WTC11 (cell line): ENCODE measurements at regions of chr6 and their contacts with region 1.

Region 1: DNA sequence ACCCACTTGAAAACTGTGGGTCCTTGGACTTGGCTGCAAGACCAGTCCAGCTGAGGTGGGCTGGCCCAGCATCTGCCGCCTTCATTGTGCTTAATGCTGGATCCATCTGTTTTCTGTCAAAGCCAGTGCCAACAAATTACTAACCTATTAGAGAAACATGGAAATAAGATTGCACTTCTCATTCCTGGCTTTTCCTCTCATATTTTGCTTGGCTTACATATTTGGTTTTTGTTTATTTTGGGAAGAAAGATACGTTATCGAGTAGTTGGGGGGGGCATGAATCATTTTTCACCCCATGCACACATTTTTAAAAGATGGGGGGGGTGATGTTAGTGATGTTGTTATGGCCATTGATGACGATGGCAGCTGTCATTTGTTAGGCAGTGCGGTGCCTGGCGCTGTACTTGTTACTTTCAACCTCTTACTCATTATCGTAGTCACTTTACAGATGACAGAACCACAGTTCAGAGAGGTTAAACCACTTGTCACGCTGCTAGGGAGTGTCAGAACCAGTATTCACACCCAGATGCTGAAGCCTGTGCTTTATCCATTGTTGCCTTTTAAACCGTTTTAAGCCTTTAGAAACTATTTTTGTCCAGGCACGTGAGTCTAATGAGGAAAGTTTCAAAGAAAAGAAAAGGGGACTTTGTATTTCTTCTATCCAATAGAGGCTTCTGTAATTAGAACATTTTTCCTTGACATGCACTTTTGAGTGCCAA is 180.0 kb downstream of the TMEM242 start:
- DNase-seq: no peak
- ATAC-seq: no peak
- H3K4me3 Mint-ChIP-seq: no peak overlapping the region
- H3K27ac Mint-ChIP-seq: 0 out of 2 replicates have a peak overlapping the region, but pooled peaks have one; percentile 20
- H3K4me1 Mint-ChIP-seq: peaks cover 39% of the 10 kb centered on the region
- H3K27me3 Mint-ChIP-seq: no peaks in the 10 kb centered on the region
- CTCF ChIP-seq: no peak

Region 2: DNA sequence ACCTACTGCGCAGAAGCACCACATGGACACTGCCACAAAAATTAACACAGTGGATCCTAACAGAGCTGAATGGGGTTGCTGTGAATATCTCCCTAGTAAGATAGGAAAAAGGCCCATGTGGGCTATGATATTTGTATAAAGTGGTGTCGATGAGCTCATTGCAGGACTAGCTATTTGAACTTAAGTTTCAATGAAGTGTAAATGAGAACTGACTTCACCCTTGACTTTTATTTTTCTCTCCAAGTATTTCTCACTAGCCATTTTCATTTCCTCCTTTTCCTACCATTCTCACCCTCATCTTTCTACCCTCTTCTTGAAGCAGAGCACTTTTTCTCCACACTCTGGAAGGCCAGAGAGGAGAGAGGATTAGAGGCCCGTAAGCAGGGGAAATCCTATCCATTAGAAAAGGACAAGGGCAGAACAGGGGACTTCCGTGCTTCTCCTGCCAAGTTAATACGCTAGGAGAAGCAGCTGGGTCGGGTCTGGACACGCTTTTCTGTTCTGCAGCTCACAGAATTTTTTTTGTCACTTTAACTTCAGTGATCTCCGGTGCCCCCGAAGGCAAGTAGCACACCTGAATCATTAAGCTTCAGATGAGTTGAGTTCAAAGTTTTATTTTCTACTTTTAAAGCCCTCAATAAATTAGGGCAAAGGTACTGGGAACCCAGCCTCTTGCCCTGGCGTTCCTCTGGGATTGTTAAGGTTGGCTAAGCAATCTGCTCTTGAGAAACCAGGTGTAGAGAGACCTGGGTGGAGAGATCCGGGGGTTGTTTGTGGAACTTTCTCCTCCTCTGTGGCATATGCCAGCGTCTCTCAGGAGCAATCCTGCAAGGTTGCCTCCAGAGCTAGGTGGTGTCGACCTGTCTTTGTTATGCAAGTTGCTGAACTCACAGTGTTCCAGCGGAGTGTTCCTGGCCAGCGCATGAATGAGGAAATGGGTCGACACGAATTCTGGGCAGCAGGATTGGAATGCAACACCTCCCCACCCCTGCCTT is 422.3 kb before region 1 on chr6:
- CTCF ChIA-PET with region 1: no interaction called
- POLR2A ChIA-PET with region 1: no interaction called
- DNase-seq: peak; percentile 69
- ATAC-seq: peak; percentile 89
- H3K4me3 Mint-ChIP-seq: peak overlapping the region; percentile 16
- H3K27ac Mint-ChIP-seq: peak overlapping the region; percentile 95
- H3K4me1 Mint-ChIP-seq: peaks cover 45% of the 10 kb centered on the region
- H3K27me3 Mint-ChIP-seq: no peaks in the 10 kb centered on the region
- CTCF ChIP-seq: no peak

Region 3: GRCh38 chr6:157056275-157056674 is 87.1 kb before region 1 on chr6:
- CTCF ChIA-PET with region 1: no interaction called
- POLR2A ChIA-PET with region 1: no interaction called
- DNase-seq: no peak
- ATAC-seq: no peak
- H3K4me3 Mint-ChIP-seq: no peak overlapping the region
- H3K27ac Mint-ChIP-seq: no peak overlapping the region
- H3K4me1 Mint-ChIP-seq: peaks cover 27% of the 10 kb centered on the region
- H3K27me3 Mint-ChIP-seq: no peaks in the 10 kb centered on the region
- CTCF ChIP-seq: no peak

Region 4: DNA sequence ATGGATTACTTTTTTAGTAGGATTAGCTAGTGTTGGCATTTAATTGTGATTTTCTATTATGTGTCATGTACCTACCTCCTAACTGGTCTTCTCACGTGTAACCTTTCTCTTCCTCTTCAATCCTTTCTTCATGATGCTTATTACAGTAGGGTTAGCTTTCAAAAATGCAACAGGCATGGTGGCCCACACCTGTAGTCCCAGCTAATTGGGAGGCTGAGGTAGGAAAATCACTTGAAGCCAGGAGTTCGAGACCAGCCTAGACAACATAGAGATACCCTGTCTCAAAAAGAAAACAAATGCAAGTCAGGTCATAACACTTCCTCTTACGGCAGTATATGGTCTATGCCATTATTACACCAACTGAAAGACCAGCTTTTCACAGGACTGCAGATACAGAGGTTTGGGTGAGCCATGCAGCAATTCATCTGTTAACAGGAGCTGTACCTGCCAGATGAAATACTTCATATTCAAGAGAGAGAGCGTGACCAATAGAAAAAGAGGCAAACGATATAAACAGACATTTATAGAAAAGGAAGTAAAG is 15.0 kb before region 1 on chr6:
- CTCF ChIA-PET with region 1: no interaction called
- POLR2A ChIA-PET with region 1: no interaction called
- DNase-seq: no peak
- ATAC-seq: no peak
- H3K4me3 Mint-ChIP-seq: no peak overlapping the region
- H3K27ac Mint-ChIP-seq: peak overlapping the region; percentile 61; the same call in 1 of the 2 replicates
- H3K4me1 Mint-ChIP-seq: peaks cover 19% of the 10 kb centered on the region
- H3K27me3 Mint-ChIP-seq: no peaks in the 10 kb centered on the region
- CTCF ChIP-seq: no peak

Region 5: DNA sequence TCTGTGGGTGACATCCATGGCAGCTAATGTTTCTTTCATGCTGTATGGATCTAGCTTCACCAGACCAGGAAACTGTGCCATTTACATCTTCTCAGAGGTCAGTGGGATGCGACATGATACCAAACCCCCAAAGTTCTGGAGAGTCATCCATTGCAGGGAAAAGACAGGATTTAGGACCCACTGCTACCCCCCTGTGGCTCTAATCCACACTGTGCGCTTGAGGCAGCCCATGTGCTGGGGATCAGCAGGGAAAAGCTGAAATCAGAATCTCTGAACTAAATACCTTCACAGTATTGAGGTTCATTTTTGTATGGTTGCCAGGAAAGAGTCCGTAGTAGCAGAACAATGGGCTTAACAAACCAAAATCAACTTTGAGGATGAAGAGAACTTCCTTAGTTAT is 15.6 kb after region 1 on chr6:
- CTCF ChIA-PET with region 1: interaction called, 13 read pairs
- POLR2A ChIA-PET with region 1: no interaction called
- DNase-seq: no peak
- ATAC-seq: peak; percentile 68
- H3K4me3 Mint-ChIP-seq: no peak overlapping the region
- H3K27ac Mint-ChIP-seq: peak overlapping the region; percentile 69
- H3K4me1 Mint-ChIP-seq: peaks cover 49% of the 10 kb centered on the region
- H3K27me3 Mint-ChIP-seq: no peaks in the 10 kb centered on the region
- CTCF ChIP-seq: no peak